Tibial artery (tissue), 4 donors: ENCODE measurements at regions of chr1 and their contacts with region 1.

Region 1: DNA sequence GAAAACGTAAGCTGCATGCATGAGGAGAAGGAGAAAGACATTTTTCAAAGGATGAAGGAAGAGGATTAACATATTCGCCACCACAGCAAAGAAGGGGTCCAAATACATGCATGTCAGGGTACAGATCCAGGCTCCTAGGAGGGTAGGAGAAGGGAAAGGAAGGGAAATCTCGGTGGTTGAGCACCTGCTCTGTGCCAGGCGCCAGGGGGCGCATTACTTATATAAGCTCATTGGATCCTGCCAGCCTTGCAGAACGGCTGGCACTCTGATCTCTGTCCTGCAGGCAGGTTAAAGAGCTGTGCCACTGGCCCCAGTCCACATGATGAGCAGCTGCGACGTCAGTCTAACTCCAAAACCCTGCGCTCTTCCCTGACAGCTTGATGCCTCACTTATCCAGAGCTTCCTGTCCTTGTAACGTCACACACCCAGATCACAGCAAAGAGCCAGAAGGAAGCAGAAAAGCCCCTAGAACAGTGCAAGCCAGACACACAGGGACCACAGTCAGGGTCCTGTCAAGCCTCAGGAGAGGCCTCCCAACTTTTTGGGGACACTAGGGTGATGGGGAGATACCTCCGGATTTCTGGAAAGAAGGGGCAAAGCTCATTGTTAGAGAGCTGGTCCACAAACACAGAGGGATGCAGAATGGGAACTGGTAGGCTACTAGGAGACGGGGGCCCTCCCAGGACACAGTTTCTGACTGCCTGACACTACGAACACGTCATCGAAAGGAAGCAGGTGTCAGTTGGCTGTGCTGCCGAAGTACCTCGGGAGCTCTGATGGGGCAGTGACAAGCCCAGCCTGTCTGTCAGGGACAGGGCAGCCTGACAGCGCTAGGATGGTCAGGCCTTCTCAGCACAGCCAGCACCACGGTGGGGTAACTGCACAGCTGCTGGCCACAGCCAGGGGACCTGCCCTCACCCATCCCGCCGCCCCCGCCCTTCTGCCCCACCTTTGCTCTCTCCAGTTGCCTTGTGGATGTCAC is 99.1 kb downstream of the BEND5 start:
- DNase-seq: peak in 1 of 2 donors; percentile 68
- H3K4me3 ChIP-seq: no peak overlapping the region
- H3K27ac ChIP-seq: no peak overlapping the region
- H3K4me1 ChIP-seq: peaks cover 0 to 38% (median 27%) of the 10 kb centered on the region in 4 donors
- H3K27me3 ChIP-seq: no peaks in the 10 kb centered on the region
- CTCF ChIP-seq: peak; percentile 67 to 75

Region 2: GRCh38 chr1:48697066-48697707 is 19.6 kb after region 1 on chr1:
- intact Hi-C with region 1: loop called (anchors 2 kb)
- DNase-seq: peak; percentile 54 to 74
- H3K4me3 ChIP-seq: no peak overlapping the region
- H3K27ac ChIP-seq: no peak overlapping the region
- H3K4me1 ChIP-seq: no peaks in the 10 kb centered on the region
- H3K27me3 ChIP-seq: peaks cover 0 to 7% of the 10 kb centered on the region in 2 donors
- CTCF ChIP-seq: peak; percentile 78 to 92

Region 3: GRCh38 chr1:48817505-48818114 is 140.0 kb after region 1 on chr1:
- intact Hi-C with region 1: loop called (anchors 5 kb)
- DNase-seq: peak; percentile 35 to 73
- H3K4me3 ChIP-seq: no peak overlapping the region
- H3K27ac ChIP-seq: no peak overlapping the region
- H3K4me1 ChIP-seq: no peaks in the 10 kb centered on the region
- H3K27me3 ChIP-seq: no peaks in the 10 kb centered on the region
- CTCF ChIP-seq: peak; percentile 70 to 71